Activated CD4-positive, alpha-beta T cell treated with anti-CD3 and anti-CD28 coated beads for 36 hours (primary cell): ENCODE measurements at regions of chr19 and their contacts with region 1.

Region 1: DNA sequence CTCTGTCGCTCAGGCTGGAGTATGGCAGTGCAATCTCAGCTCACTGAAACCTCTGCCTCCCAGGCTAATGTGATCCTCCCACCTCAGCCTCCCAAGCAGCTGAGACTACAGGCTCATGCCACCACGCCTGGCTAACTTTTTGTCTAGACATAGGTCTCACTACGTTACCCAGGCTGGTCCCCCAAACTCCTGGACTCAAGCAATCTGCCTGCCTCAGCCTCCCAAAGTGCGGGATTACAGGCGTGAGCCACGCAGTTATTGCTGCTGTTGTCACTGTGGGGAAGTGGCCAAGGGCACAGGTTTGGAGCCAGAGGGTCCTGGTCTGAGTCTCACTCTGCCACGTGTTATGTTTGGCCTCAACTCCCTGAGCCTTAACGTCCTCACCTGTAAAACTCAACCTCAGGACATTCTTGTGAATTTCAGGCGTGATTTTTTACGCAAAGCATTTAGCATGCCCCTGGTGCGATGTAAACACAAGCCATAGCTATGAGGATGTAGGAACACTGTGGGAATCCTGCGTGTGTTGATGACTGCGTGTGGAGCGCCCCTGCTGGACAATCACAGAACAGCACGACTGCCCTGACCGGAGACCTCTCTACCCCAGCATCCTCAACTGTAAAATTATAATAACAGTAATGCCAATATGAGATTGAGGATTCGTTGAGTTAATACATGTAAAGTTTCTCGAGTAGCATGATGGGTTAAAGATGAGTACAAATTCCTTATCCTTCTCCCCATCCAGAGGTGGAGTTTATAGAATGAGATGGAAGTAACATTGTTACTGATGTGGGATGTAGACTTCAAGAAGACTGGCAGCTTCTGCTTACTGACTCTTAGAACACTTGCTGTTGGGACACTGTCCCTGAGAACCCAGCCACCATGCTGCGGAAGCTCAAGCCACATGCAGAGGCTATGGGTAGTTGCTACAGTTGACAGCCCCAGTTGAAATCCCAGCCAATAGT is 41.8 kb upstream of the PNMA8B start:
- DNase-seq: peak; percentile 80
- ATAC-seq: peak; percentile 72
- H3K4me3 Mint-ChIP-seq: no peak overlapping the region
- H3K27ac Mint-ChIP-seq: no peak overlapping the region
- H3K4me1 Mint-ChIP-seq: peaks cover 9% of the 10 kb centered on the region
- H3K27me3 Mint-ChIP-seq: no peaks in the 10 kb centered on the region

Region 2: DNA sequence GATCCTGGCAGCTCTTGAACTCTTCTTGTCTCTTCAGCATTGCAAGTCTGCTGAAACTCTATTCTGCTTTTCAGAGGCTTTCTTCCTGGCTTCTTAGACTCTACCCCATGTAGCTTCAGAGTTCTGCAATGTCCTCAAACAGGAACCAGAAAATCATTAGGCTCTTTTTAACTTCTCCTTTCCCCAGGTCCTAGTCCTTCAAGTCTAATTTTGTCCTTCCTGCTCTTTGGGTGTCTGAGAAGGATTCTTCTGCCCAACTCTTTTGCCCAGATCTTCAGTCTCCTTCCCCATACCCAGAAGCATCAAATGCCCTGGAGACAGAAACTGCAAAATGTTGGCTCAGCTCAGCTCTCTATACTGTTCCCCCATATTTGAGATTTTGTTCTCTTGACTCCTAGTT is 13.7 kb after region 1 on chr19:
- CTCF ChIA-PET with region 1: interaction called, 13 read pairs
- POLR2A ChIA-PET with region 1: no interaction called
- intact Hi-C with region 1: no loop called
- DNase-seq: no peak
- ATAC-seq: no peak
- H3K4me3 Mint-ChIP-seq: no peak overlapping the region
- H3K27ac Mint-ChIP-seq: no peak overlapping the region
- H3K4me1 Mint-ChIP-seq: no peaks in the 10 kb centered on the region
- H3K27me3 Mint-ChIP-seq: peaks cover 4% of the 10 kb centered on the region